GM12878 (cell line): ENCODE measurements at regions of chr5 and their contacts with region 1.

Region 1: GRCh38 chr5:93607367-93608258 is 24.6 kb downstream of the NR2F1 start:
- DNase-seq: no peak
- ATAC-seq: peak; percentile 93
- H3K4me3 ChIP-seq: no peak overlapping the region
- H3K27ac ChIP-seq: no peak overlapping the region
- H3K4me1 ChIP-seq: 0 out of 2 replicates have a peak, but pooled peaks cover 3% of the 10 kb centered on the region
- H3K27me3 ChIP-seq: peaks cover 3 to 39% of the 10 kb centered on the region in 2 experiments
- CTCF ChIP-seq: peak; percentile 54 to 70 (median 69)
- EP300 ChIP-seq: no peak
- POLR2A ChIP-seq: no peak
- RAD21 ChIP-seq: peak; percentile 83

Region 2: DNA sequence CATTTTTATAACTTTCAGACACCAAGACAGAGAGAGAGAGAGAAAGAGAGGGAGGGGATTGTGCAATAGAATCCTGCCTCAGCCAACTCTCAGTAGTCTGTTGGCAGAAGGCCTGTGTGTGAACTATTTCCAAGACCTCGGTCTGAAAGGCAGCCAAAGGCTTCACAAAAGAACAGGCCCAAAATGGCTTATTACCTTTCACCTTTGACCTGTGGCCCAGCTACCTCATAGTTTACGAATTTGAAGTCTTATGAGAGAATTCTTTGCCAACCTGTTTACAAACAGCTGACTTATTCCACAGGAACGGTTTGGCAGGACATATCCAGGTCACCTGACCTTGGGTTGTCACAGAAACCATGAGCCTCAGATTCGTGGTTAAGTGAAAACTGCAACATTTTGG is 75.2 kb before region 1 on chr5:
- CTCF ChIA-PET with region 1: no interaction called
- POLR2A ChIA-PET with region 1: no interaction called
- RAD21 ChIA-PET with region 1: no interaction called
- SMC1A ChIA-PET with region 1: no interaction called
- in situ Hi-C with region 1: no loop called
- intact Hi-C with region 1: no loop called
- DNase-seq: no peak
- ATAC-seq: no peak
- H3K4me3 ChIP-seq: no peak overlapping the region
- H3K27ac ChIP-seq: no peak overlapping the region
- H3K4me1 ChIP-seq: no peaks in the 10 kb centered on the region
- H3K27me3 ChIP-seq: no peaks in the 10 kb centered on the region
- CTCF ChIP-seq: no peak
- EP300 ChIP-seq: no peak
- POLR2A ChIP-seq: no peak
- RAD21 ChIP-seq: no peak

Region 3: GRCh38 chr5:93620487-93621326 is 13.1 kb after region 1 on chr5:
- CTCF ChIA-PET with region 1: interaction called, 18 read pairs
- POLR2A ChIA-PET with region 1: no interaction called
- RAD21 ChIA-PET with region 1: interaction called, 3 read pairs
- SMC1A ChIA-PET with region 1: interaction called, 4 read pairs
- in situ Hi-C with region 1: no loop called
- intact Hi-C with region 1: no loop called
- DNase-seq: no peak
- ATAC-seq: peak; percentile 99
- H3K4me3 ChIP-seq: peak overlapping the region; percentile 86
- H3K27ac ChIP-seq: no peak overlapping the region
- H3K4me1 ChIP-seq: peaks cover 3% of the 10 kb centered on the region; the same call in 1 of the 2 replicates
- H3K27me3 ChIP-seq: no peaks in the 10 kb centered on the region
- CTCF ChIP-seq: peak in 2 of 3 experiments; percentile 11 to 34; a peak in 2 of 6 replicates
- EP300 ChIP-seq: no peak
- POLR2A ChIP-seq: no peak
- RAD21 ChIP-seq: peak; percentile 17; the same call in 1 of the 2 replicates

Region 4: GRCh38 chr5:93909356-93909755 is 301.7 kb after region 1 on chr5:
- CTCF ChIA-PET with region 1: no interaction called
- POLR2A ChIA-PET with region 1: no interaction called
- RAD21 ChIA-PET with region 1: no interaction called
- SMC1A ChIA-PET with region 1: no interaction called
- in situ Hi-C with region 1: no loop called
- intact Hi-C with region 1: loop called (anchors 5 kb)
- DNase-seq: no peak
- ATAC-seq: no peak
- H3K4me3 ChIP-seq: no peak overlapping the region
- H3K27ac ChIP-seq: no peak overlapping the region
- H3K4me1 ChIP-seq: no peaks in the 10 kb centered on the region
- H3K27me3 ChIP-seq: no peaks in the 10 kb centered on the region
- CTCF ChIP-seq: 0 out of 6 replicates have a peak, but pooled peaks of 2 of the 3 experiments have one; percentile 3 to 8
- EP300 ChIP-seq: no peak
- POLR2A ChIP-seq: no peak
- RAD21 ChIP-seq: 0 out of 2 replicates have a peak, but pooled peaks have one; percentile 6